ENCODE measurements at regions of chr12 and their contacts with region 1.

Region 1: GRCh38 chr12:47547085-47547484 is 158.7 kb downstream of the RPAP3 start:
- DNase-seq: peak; percentile 24
- H3K4me3 ChIP-seq: no peak overlapping the region
- H3K27ac ChIP-seq: no peak overlapping the region
- H3K4me1 ChIP-seq: peaks cover 8% of the 10 kb centered on the region
- H3K27me3 ChIP-seq: no peaks in the 10 kb centered on the region
- CTCF ChIP-seq: peak; percentile 68 to 71

Region 2: GRCh38 chr12:46763230-46763629 is 783.9 kb before region 1 on chr12:
- CTCF ChIA-PET with region 1: no interaction called
- dilution Hi-C with region 1: no loop called
- in situ Hi-C with region 1: no loop called
- intact Hi-C with region 1: no loop called
- DNase-seq: no peak
- H3K4me3 ChIP-seq: no peak overlapping the region
- H3K27ac ChIP-seq: no peak overlapping the region
- H3K4me1 ChIP-seq: no peaks in the 10 kb centered on the region
- H3K27me3 ChIP-seq: no peaks in the 10 kb centered on the region
- CTCF ChIP-seq: no peak

Region 3: DNA sequence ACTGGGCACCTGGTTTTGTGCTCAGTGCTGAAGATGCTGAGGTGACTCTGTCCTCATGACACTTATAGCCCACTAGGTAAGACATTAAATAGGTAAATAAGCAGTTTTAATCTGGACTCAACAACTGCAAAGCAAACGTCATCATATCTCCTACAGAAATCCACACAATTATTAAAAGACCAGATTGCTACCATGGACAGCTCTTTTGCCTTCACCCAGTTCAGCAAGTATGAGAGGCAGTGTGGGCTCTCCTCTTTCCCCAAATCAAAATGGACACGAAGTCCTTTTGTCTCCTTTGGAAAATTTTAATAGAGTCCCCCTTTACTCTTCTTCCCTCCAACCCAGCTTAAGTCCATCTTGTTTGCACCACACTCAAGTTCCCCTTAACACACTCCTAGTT is 12.4 kb before region 1 on chr12:
- CTCF ChIA-PET with region 1: no interaction called
- dilution Hi-C with region 1: no loop called
- in situ Hi-C with region 1: no loop called
- intact Hi-C with region 1: no loop called
- DNase-seq: peak; percentile 20
- H3K4me3 ChIP-seq: no peak overlapping the region
- H3K27ac ChIP-seq: no peak overlapping the region
- H3K4me1 ChIP-seq: no peaks in the 10 kb centered on the region
- H3K27me3 ChIP-seq: peaks cover 2% of the 10 kb centered on the region
- CTCF ChIP-seq: no peak

Region 4: DNA sequence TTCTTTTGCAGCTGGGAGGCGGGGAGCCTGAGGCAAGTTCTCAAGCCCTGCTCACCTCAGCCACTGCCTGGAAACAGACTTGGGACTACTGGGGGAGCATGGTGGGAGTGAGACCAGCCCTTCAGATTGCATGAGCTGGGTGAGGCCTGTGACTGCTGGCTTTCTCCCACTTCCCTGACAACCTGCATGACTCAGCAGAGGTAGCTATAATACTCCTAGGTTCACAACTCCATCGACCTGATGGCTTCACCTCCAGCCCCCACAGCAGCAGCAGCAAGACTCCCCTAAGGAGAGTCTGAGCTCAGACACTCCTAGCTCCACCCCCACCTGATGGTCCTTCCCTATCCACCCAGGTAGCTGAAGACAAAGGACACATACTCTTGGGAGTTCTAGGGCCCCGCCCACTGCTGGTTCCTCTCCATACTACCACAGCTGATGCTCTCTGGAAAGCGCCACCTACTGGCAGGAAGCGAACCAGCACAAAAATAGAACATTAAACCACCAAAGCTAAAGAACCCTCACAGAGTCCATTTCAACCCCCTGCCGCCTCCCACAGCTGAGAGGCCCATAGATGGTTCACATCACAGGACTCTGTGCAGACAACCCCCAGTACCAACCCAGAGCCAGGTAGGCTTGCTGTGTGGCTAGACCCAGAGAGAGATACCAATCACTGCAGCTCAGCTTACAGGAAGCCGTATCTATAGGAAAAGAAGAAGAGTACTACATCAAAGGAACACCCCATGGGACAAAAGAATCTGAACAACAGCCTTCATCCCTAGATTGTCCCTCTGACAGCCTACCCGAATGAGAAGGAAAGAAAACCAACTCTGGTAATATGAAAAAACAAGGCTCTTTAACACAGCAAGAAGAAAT is 90.1 kb after region 1 on chr12:
- CTCF ChIA-PET with region 1: interaction called, 15 read pairs
- dilution Hi-C with region 1: no loop called
- in situ Hi-C with region 1: no loop called
- intact Hi-C with region 1: loop called (anchors 1 kb)
- DNase-seq: peak; percentile 73
- H3K4me3 ChIP-seq: no peak overlapping the region
- H3K27ac ChIP-seq: no peak overlapping the region
- H3K4me1 ChIP-seq: no peaks in the 10 kb centered on the region
- H3K27me3 ChIP-seq: no peaks in the 10 kb centered on the region
- CTCF ChIP-seq: peak; percentile 56 to 77

Region 5: DNA sequence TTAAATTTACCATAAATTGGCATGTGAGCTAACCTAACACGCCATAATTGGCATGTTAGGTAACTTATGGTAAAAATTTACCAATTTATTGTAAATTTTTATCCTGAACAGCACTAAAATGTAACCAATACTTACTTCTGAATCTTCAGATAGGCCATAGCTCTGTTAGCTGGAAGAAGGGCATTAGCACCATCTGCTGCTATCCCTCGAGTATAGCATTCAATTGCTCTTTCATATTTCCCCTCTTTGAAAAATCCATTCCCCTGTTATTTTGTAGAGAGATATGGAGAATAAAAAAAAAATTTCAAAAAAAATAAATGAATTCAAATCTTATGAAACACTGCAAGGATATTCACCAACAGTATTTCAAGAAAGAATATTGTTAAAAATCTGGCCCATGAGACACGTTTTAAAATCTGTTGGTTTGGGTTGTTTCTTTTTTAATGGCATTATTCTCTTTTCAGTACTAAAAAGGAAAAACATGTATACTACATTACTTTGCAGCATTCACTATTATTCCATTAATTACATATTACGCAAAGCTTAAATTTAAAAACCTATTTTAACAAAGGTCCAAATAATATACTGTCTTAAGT is 139.7 kb after region 1 on chr12:
- CTCF ChIA-PET with region 1: interaction called, 8 read pairs
- dilution Hi-C with region 1: no loop called
- in situ Hi-C with region 1: no loop called
- intact Hi-C with region 1: loop called (anchors 1 kb)
- DNase-seq: peak; percentile 5
- H3K4me3 ChIP-seq: no peak overlapping the region
- H3K27ac ChIP-seq: no peak overlapping the region
- H3K4me1 ChIP-seq: no peaks in the 10 kb centered on the region
- H3K27me3 ChIP-seq: no peaks in the 10 kb centered on the region
- CTCF ChIP-seq: peak; percentile 54 to 79

Measured in mammary epithelial cell (primary cell).